Heart right ventricle (tissue), 16 donors: ENCODE measurements at regions of chr20 and their contacts with region 1.

Region 1: DNA sequence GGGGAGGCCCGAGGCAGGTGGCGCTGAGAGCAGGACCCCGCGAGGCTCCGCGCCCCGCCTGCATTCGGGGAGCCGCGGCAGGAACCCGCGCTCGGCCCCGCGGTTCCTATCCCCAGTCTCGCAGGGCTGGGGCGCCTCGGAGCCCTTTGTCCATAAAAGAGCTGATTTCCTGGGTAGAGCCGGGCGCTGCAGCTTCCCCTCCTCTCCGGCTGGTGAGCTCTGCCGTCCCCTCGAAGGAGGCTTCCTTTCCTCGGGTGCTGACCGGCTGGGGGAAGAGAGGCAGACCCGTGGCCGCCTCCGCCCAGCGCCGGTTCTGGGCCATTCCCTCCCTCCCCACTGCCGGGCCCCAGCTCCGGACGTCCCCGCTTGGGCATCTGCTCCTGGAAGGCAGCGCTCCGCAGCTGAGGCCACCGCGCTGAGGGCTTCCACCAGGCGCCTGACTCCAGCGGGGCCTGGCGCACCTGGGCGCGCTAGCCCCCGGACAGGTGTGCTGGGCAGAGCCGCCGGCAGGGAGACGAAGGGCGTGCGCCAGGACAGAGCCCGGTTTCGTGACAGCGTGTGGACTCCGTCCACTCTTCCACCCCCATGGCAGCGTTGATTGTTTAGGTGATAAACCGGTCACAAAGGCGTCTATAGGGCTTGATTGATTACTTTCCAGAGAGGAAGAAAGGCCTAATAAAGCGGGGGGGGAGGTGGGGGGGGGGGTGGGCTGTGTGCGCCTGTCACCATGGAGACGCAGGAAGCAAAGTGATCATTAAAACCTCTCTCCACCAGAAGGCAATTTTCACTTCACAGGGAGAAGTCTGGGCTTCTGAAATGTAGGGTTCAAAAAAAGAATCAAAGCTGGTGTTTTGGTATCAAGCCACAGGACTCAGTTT is 1.1 kb downstream of the PHACTR3 start:
- DNase-seq: peak in 1 of 2 donors; percentile 23
- ATAC-seq: peak in 5 of 8 donors; percentile 29 to 60 (median 44)
- H3K4me3 ChIP-seq: peak overlapping the region in 8 of 10 donors; percentile 32 to 42 (median 34)
- H3K27ac ChIP-seq: no peak overlapping the region
- H3K4me1 ChIP-seq: peaks cover 0 to 16% (median 10%) of the 10 kb centered on the region in 9 donors
- H3K27me3 ChIP-seq: peaks cover 17 to 96% (median 71%) of the 10 kb centered on the region in 7 donors
- CTCF ChIP-seq: no peak

Region 2: DNA sequence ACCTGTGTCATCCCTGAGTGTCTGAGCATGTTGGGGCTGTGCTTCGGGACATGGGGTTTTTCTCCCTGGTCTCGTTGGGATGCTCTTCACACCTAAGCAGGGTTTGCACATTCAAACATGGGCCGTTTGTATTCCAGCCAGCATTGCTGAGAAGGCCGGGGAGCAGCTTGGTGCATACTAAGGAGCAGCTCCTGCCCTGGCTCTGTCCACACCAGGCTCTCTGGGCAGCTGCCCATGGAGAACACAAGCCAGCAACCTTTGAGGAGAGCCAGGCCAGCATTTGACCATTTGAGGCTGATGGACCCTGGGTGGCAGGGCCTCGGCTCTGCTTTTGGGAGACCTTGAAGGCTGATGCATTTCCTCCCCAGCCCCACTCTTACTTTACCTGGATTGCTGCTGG is 91.1 kb after region 1 on chr20:
- intact Hi-C with region 1: loop called in 1 of 10 experiments (anchors 10 kb)
- DNase-seq: no peak
- ATAC-seq: no peak
- H3K4me3 ChIP-seq: no peak overlapping the region
- H3K27ac ChIP-seq: no peak overlapping the region
- H3K4me1 ChIP-seq: peaks cover 0 to 12% (median 0%) of the 10 kb centered on the region in 9 donors
- H3K27me3 ChIP-seq: peaks cover 0 to 30% (median 0%) of the 10 kb centered on the region in 7 donors
- CTCF ChIP-seq: no peak

Region 3: GRCh38 chr20:59751056-59751688 is 145.8 kb after region 1 on chr20:
- intact Hi-C with region 1: loop called in 1 of 10 experiments (anchors 5 kb)
- DNase-seq: peak; percentile 63 to 78
- ATAC-seq: peak; percentile 61 to 87 (median 80)
- H3K4me3 ChIP-seq: no peak overlapping the region
- H3K27ac ChIP-seq: peak overlapping the region in 2 of 10 donors; percentile 79 to 82
- H3K4me1 ChIP-seq: peaks cover 0 to 42% (median 29%) of the 10 kb centered on the region in 9 donors
- H3K27me3 ChIP-seq: peaks cover 0 to 71% (median 23%) of the 10 kb centered on the region in 7 donors
- CTCF ChIP-seq: peak; percentile 51 to 87 (median 79)

Region 4: GRCh38 chr20:59880198-59880597 is 274.8 kb after region 1 on chr20:
- intact Hi-C with region 1: no loop called
- DNase-seq: no peak
- ATAC-seq: no peak
- H3K4me3 ChIP-seq: no peak overlapping the region
- H3K27ac ChIP-seq: no peak overlapping the region
- H3K4me1 ChIP-seq: peaks cover 0 to 6% (median 0%) of the 10 kb centered on the region in 9 donors
- H3K27me3 ChIP-seq: no peaks in the 10 kb centered on the region
- CTCF ChIP-seq: no peak